PC-3 (cell line): ENCODE measurements at regions of chr14 and their contacts with region 1.

Region 1: DNA sequence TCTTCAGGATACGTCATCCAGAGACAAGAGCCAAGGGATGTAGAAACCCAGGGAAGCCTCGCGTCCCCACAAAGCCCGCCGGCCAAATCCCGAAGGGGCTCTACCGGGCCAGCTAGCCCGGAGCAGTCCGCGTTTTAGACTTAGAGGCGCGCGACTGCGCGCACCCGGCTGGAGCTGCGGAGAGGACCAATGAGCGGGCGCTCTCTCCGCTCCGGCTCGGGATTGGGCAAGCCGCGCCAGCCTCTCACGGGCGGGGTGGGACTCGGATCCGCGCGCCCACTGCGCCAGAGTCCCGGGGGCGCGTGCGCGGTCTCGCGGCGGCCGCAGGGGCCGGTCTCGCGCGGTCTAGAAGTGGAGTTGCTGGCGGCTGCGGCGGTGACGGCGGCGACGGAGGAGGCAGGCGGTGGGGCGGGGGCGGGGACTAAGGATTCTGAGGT is 239 bp upstream of the PALS1 start:
- DNase-seq: peak; percentile 98
- ATAC-seq: peak; percentile 81
- H3K4me3 ChIP-seq: peak overlapping the region; percentile 81
- H3K27ac ChIP-seq: peak overlapping the region; percentile 93
- H3K4me1 ChIP-seq: peaks cover 30% of the 10 kb centered on the region
- H3K27me3 ChIP-seq: no peaks in the 10 kb centered on the region
- CTCF ChIP-seq: no peak

Region 2: DNA sequence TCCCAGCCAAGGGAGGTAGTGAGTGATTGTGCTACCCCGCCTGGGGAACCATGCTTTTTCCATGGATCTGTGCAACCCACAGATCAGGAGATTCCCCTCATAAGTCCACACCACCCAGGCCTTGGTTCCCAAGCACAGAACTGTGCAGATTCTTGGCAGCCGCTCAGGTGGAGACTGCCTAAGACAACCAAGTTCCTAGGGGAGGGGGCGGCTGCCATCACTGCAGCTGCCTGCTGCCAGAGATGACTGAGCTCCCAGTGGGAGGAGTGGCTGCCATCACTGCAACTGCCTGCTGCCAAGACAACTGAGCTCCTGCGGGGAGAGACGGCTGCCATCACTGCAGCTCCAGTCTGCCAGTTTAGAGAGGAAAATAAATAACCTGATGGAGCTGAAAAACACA is 190.1 kb before region 1 on chr14:
- CTCF ChIA-PET with region 1: no interaction called
- POLR2A ChIA-PET with region 1: no interaction called
- intact Hi-C with region 1: no loop called
- DNase-seq: no peak
- ATAC-seq: no peak
- H3K4me3 ChIP-seq: no peak overlapping the region
- H3K27ac ChIP-seq: no peak overlapping the region
- H3K4me1 ChIP-seq: no peaks in the 10 kb centered on the region
- H3K27me3 ChIP-seq: no peaks in the 10 kb centered on the region
- CTCF ChIP-seq: no peak

Region 3: GRCh38 chr14:67166450-67166853 is 74.5 kb before region 1 on chr14:
- CTCF ChIA-PET with region 1: interaction called, 6 read pairs
- POLR2A ChIA-PET with region 1: interaction called, 8 read pairs
- intact Hi-C with region 1: loop called (anchors 1 kb)
- DNase-seq: peak; percentile 77
- ATAC-seq: peak; percentile 52
- H3K4me3 ChIP-seq: no peak overlapping the region
- H3K27ac ChIP-seq: no peak overlapping the region
- H3K4me1 ChIP-seq: peaks cover 13% of the 10 kb centered on the region
- H3K27me3 ChIP-seq: no peaks in the 10 kb centered on the region
- CTCF ChIP-seq: peak; percentile 96

Region 4: GRCh38 chr14:67221248-67221981 is 19.6 kb before region 1 on chr14:
- CTCF ChIA-PET with region 1: no interaction called
- POLR2A ChIA-PET with region 1: no interaction called
- intact Hi-C with region 1: loop called (anchors 1 kb)
- DNase-seq: peak; percentile 93
- ATAC-seq: peak; percentile 97
- H3K4me3 ChIP-seq: peak overlapping the region; percentile 29; the same call in 1 of the 2 replicates
- H3K27ac ChIP-seq: peak overlapping the region; percentile 29
- H3K4me1 ChIP-seq: peaks cover 23% of the 10 kb centered on the region
- H3K27me3 ChIP-seq: no peaks in the 10 kb centered on the region
- CTCF ChIP-seq: no peak

Region 5: GRCh38 chr14:67285876-67286452 is 45.0 kb after region 1 on chr14:
- CTCF ChIA-PET with region 1: interaction called, 7 read pairs
- POLR2A ChIA-PET with region 1: no interaction called
- intact Hi-C with region 1: loop called (anchors 1 kb)
- DNase-seq: peak; percentile 86
- ATAC-seq: peak; percentile 52
- H3K4me3 ChIP-seq: no peak overlapping the region
- H3K27ac ChIP-seq: no peak overlapping the region
- H3K4me1 ChIP-seq: no peaks in the 10 kb centered on the region
- H3K27me3 ChIP-seq: no peaks in the 10 kb centered on the region
- CTCF ChIP-seq: peak; percentile 81

Region 6: GRCh38 chr14:67359775-67360648 is 119.0 kb after region 1 on chr14 and contains the starts of genes ATP6V1D and EIF2S1:
- CTCF ChIA-PET with region 1: no interaction called
- POLR2A ChIA-PET with region 1: no interaction called
- intact Hi-C with region 1: loop called (anchors 1 kb)
- DNase-seq: peak; percentile 99
- ATAC-seq: peak; percentile 85
- H3K4me3 ChIP-seq: peak within 1 kb of the TSS; percentile 83
- H3K27ac ChIP-seq: peak within 1 kb of the TSS; percentile 79
- H3K4me1 ChIP-seq: peaks cover 40% of the 10 kb centered on the region
- H3K27me3 ChIP-seq: no peaks in the 10 kb centered on the region
- CTCF ChIP-seq: peak; percentile 100
- total RNA-seq, gene ATP6V1D: 69.6 and 85.9 TPM in 2 replicates
- total RNA-seq, gene EIF2S1: 345 and 415 TPM in 2 replicates

Region 7: GRCh38 chr14:67487937-67488893 is 247.2 kb after region 1 on chr14 and contains the start of gene TMEM229B:
- CTCF ChIA-PET with region 1: no interaction called
- POLR2A ChIA-PET with region 1: no interaction called
- intact Hi-C with region 1: no loop called
- DNase-seq: no peak
- ATAC-seq: no peak
- H3K4me3 ChIP-seq: no peak within 1 kb of the TSS
- H3K27ac ChIP-seq: no peak within 1 kb of the TSS
- H3K4me1 ChIP-seq: no peaks in the 10 kb centered on the region
- H3K27me3 ChIP-seq: no peaks in the 10 kb centered on the region; the same call in 1 of the 2 replicates
- CTCF ChIP-seq: no peak
- total RNA-seq, gene TMEM229B: not detected in 2 replicates